Psoas muscle (tissue), 8 donors: ENCODE measurements at regions of chr15 and their contacts with region 1.

Region 1: GRCh38 chr15:57561041-57561711 is 30.5 kb upstream of the MYZAP start:
- DNase-seq: peak; percentile 54 to 73
- ATAC-seq: peak; percentile 94 to 99 (median 96)
- H3K4me3 ChIP-seq: no peak overlapping the region
- H3K27ac ChIP-seq: no peak overlapping the region
- H3K4me1 ChIP-seq: no peaks in the 10 kb centered on the region
- H3K27me3 ChIP-seq: no peaks in the 10 kb centered on the region
- CTCF ChIP-seq: peak; percentile 94

Region 2: DNA sequence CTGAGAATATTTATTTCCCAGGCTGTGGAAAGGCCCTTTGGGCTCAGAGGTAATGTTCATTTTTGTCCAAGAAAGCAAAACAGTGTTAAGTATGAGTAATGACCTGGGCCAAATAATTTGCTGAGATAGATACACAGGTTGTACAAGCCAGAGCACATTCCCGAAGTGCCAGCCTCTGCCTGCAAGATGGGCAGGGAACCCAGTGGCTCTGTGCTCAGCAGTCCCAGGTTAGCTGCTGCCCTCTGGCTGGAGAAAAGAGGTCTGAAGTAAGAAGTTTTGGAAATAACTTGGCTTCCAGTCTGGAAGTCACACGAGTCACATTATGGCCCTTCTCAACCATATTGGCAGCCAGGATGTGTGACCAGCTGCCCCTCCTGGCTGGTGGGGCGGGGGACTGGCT is 50.8 kb after region 1 on chr15:
- intact Hi-C with region 1: loop called in 1 of 2 experiments (anchors 5 kb)
- DNase-seq: no peak
- ATAC-seq: peak; percentile 39 to 75 (median 68)
- H3K4me3 ChIP-seq: no peak overlapping the region
- H3K27ac ChIP-seq: no peak overlapping the region
- H3K4me1 ChIP-seq: peaks cover 5% of the 10 kb centered on the region
- H3K27me3 ChIP-seq: no peaks in the 10 kb centered on the region
- CTCF ChIP-seq: peak; percentile 24

Region 3: DNA sequence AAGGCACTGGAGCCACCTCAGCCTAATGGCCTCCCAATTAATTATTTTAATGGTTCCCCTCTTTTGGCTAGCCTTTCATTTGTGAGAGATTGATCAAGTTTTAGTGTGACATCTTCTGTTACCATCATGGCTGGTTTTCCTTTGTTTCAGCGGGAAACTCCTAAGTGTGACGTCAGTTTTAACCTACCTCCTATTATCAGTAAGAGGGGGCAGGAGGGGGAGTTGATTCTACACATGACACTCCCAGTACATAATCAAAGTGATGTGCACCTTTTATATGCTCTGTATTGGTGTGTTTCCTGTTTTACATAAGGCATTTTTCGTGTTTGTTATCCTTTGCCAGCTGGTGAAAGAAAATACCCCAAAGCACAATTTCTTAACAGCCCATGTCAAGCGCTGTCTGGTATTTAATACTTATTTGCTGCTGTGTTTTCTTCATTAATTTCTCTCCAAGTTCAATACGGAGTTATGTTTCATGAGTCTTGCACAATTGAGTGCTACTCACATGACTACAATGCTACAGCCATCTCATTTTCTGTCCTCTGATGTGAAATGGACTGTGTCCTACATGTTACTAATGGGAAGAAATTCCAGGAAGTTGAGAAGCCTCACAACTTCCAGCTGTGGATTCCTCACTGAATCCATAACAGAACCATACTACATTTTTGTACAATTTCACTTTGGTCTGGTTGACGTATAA is 93.1 kb after region 1 on chr15:
- intact Hi-C with region 1: loop called (anchors 2 to 5 kb)
- DNase-seq: no peak
- ATAC-seq: peak in 3 of 4 donors; percentile 36 to 72 (median 53)
- H3K4me3 ChIP-seq: no peak overlapping the region
- H3K27ac ChIP-seq: no peak overlapping the region
- H3K4me1 ChIP-seq: no peaks in the 10 kb centered on the region
- H3K27me3 ChIP-seq: no peaks in the 10 kb centered on the region
- CTCF ChIP-seq: no peak

Region 4: DNA sequence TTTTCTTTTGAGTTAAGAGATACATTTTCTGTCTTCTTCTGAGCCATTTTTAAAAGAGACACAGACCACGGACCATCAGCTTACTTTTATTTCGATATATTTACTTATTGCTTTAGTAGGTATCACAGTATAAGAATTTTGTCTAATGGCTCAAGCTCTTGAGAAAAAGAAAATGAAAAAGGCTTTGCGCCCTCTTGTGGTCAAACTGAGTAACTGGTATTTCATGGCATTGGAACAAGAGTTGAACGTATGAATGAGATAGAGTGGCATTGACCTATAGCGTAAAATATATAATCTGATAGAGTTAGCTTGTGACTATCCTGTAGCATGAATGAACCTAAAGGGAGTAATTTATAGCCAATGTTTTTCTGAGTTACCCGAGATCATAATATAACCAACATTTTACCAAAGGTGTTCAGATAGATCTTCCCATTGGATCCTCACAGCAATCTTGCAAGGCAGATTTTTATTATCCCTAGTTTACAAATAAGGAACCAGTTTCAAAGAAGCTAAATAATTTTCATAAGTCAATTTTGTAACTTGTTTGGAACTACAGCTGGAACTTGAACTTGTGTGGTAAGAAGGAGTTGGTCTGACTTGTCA is 300.0 kb after region 1 on chr15:
- intact Hi-C with region 1: loop called (anchors 5 kb)
- DNase-seq: no peak
- ATAC-seq: peak in 2 of 4 donors; percentile 32 to 72
- H3K4me3 ChIP-seq: no peak overlapping the region
- H3K27ac ChIP-seq: no peak overlapping the region
- H3K4me1 ChIP-seq: no peaks in the 10 kb centered on the region
- H3K27me3 ChIP-seq: peaks cover 0 to 3% (median 0%) of the 10 kb centered on the region in 3 donors
- CTCF ChIP-seq: peak; percentile 90

Region 5: GRCh38 chr15:58182460-58183163 is 621.4 kb after region 1 on chr15:
- intact Hi-C with region 1: loop called in 1 of 2 experiments (anchors 10 kb)
- DNase-seq: peak; percentile 25 to 57
- ATAC-seq: peak; percentile 57 to 68 (median 62)
- H3K4me3 ChIP-seq: no peak overlapping the region
- H3K27ac ChIP-seq: no peak overlapping the region
- H3K4me1 ChIP-seq: no peaks in the 10 kb centered on the region
- H3K27me3 ChIP-seq: peaks cover 0 to 4% (median 0%) of the 10 kb centered on the region in 3 donors
- CTCF ChIP-seq: peak; percentile 68